ENCODE measurements at regions of chr4 and their contacts with region 1.

Region 1: DNA sequence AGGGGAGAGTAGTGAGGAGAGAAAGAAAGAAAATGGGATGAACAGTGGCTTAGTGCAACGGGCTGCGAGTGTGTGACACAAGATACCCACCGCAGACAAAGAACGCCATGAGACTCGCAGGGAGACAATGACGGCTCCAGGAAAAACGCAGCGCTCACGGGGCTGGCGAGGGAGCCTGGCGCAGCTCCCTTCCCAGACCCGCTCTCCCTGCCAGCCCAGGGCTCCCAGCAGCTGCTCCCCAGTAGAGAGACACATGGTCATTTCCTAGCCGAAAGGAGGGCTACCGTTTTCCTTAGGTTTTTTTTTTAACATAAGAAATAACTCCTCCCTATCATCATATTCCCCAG is 149.5 kb downstream of the MAML3 start:
- DNase-seq: no peak
- H3K4me3 ChIP-seq: no peak overlapping the region
- H3K27ac ChIP-seq: no peak overlapping the region
- H3K4me1 ChIP-seq: no peaks in the 10 kb centered on the region
- H3K27me3 ChIP-seq: no peaks in the 10 kb centered on the region
- CTCF ChIP-seq: no peak

Region 2: DNA sequence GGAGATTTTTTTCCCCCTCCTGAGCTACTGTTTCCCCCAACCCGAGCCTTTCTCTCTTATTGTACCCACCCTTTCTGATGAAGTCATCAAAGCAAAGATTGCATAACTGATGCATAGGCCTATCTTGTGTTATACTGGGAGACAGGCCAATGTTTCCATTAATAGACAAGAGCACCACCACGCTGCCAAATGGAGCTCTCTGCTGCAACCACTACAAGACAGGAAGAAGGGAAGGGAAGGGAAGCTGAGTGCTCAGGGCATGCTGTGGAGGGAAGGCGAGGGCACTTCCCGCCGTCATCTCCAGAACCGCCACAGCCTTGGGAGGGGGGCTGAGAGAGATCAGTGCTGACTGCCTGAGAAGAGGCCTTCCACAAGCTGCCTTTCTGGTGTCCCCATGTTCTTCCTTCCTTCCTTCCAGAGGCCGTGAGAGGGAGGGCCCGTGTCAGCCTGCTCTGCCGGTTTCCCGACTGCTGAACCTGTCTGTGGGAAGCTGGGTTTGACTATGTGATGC is 263.9 kb before region 1 on chr4:
- intact Hi-C with region 1: loop called (anchors 10 kb)
- DNase-seq: peak; percentile 42
- H3K4me3 ChIP-seq: no peak overlapping the region
- H3K27ac ChIP-seq: no peak overlapping the region
- H3K4me1 ChIP-seq: no peaks in the 10 kb centered on the region
- H3K27me3 ChIP-seq: no peaks in the 10 kb centered on the region
- CTCF ChIP-seq: no peak

Measured in colonic mucosa (tissue), 4 donors.